Transverse colon (tissue), 4 donors: ENCODE measurements at regions of chr17 and their contacts with region 1.

Region 1: GRCh38 chr17:7922845-7923628 is 6.6 kb downstream of the KCNAB3 start:
- DNase-seq: peak; percentile 88
- H3K4me3 ChIP-seq: peak overlapping the region in 3 of 4 donors; percentile 28 to 42 (median 37)
- H3K27ac ChIP-seq: peak overlapping the region; percentile 53 to 75 (median 57)
- H3K4me1 ChIP-seq: peaks cover 2 to 12% (median 8%) of the 10 kb centered on the region in 4 donors
- H3K27me3 ChIP-seq: no peaks in the 10 kb centered on the region
- CTCF ChIP-seq: no peak
- EP300 ChIP-seq: no peak
- POLR2A ChIP-seq: peak; percentile 71

Region 2: GRCh38 chr17:7794075-7794663 is 128.9 kb before region 1 on chr17:
- in situ Hi-C with region 1: no loop called
- intact Hi-C with region 1: no loop called
- DNase-seq: no peak
- H3K4me3 ChIP-seq: no peak overlapping the region
- H3K27ac ChIP-seq: no peak overlapping the region
- H3K4me1 ChIP-seq: no peaks in the 10 kb centered on the region
- H3K27me3 ChIP-seq: no peaks in the 10 kb centered on the region
- CTCF ChIP-seq: no peak
- EP300 ChIP-seq: no peak
- POLR2A ChIP-seq: no peak

Region 3: DNA sequence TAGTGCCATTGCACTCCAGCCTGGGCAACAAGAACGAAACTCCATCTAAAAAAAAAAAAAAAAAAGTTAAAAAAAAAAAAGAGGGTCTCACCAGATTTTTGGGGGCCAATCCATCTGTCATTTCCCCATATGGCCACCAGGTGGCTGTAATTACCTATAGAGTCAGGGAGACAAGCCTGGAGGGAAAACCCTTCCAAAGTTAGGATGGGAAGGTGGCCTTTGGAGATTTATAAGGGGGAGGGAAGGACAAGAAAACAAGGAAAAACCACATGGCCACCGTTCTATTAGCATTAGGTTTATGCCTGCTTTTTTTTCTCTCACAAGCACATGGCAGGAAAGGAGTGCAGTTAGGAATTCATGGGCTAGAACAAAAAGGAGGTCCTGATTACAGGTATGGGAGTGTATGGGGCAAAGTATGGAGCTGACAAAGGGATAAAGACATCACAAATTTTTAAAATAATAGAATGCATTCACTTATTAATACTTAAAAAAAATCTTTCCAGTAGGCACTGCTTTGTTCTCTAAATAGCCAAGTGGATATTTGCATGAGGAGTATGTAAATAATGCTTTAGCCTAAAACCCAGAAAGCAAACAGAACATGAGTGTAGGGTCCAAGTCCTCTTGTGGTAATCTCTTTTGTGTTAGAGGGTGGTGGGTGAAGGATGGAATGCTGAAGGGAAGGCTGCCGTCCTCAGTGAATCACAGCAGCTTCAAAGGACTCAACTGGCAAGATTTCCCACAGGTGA is 60.2 kb before region 1 on chr17:
- in situ Hi-C with region 1: no loop called
- intact Hi-C with region 1: loop called (anchors 10 kb)
- DNase-seq: peak; percentile 31
- H3K4me3 ChIP-seq: no peak overlapping the region
- H3K27ac ChIP-seq: no peak overlapping the region
- H3K4me1 ChIP-seq: peaks cover 6 to 27% (median 15%) of the 10 kb centered on the region in 4 donors
- H3K27me3 ChIP-seq: no peaks in the 10 kb centered on the region
- CTCF ChIP-seq: peak; percentile 81 to 94 (median 86)
- EP300 ChIP-seq: no peak
- POLR2A ChIP-seq: no peak